Activated B cell treated with CpG ODN at 0.5 μM for 24 hours (primary cell): ENCODE measurements at regions of chr19 and their contacts with region 1.

Region 1: GRCh38 chr19:54168174-54168917 is 4.6 kb downstream of the TMC4 start:
- DNase-seq: peak; percentile 85
- ATAC-seq: peak; percentile 89
- H3K4me3 Mint-ChIP-seq: no peak overlapping the region
- H3K27ac Mint-ChIP-seq: no peak overlapping the region
- H3K4me1 Mint-ChIP-seq: peaks cover 24% of the 10 kb centered on the region
- H3K27me3 Mint-ChIP-seq: peaks cover 17% of the 10 kb centered on the region
- CTCF ChIP-seq: peak; percentile 71

Region 2: GRCh38 chr19:54077334-54077733 is 91.0 kb before region 1 on chr19:
- CTCF ChIA-PET with region 1: no interaction called
- POLR2A ChIA-PET with region 1: no interaction called
- intact Hi-C with region 1: no loop called
- DNase-seq: no peak
- ATAC-seq: no peak
- H3K4me3 Mint-ChIP-seq: no peak overlapping the region
- H3K27ac Mint-ChIP-seq: no peak overlapping the region
- H3K4me1 Mint-ChIP-seq: no peaks in the 10 kb centered on the region
- H3K27me3 Mint-ChIP-seq: no peaks in the 10 kb centered on the region
- CTCF ChIP-seq: no peak

Region 3: DNA sequence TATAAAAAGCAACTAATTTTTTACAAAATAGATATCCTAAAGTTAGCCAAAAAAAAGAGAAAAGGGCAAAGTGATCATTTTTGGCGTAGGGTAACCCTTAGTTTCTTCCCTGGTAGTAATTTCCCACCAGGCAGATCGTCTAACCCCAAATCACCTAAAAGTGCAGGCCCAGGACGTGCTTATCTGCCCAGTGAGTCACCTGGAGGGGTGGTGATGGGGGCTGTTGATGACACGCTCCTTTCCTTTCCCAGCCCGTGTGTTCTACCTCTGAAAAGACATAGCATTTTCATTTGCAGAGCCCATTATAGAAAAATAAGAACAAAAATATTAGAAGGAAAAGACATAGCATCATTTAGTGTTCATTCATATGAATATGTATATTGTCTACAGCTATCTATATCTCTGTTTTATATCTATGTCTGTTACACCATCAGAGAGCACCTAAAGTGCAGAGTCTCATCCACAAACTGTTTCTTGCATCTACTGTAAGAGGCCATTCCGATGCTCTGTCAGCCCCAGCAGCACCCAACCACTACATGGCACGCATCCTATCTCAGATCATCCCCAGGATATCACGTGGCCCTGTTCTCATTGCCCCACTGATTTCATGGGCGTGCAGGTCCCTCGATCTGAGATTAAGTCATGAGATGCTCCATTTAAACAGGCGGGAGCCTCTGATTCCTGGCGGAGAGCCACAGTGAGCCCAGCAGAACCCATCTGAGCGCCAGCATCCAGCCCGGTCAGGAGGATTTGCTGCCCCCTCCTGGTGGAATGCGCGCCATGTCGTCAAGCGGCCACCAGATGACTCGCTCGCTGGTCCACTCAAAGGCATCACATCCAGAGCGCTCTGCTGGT is 63.0 kb after region 1 on chr19:
- CTCF ChIA-PET with region 1: interaction called, 5 read pairs
- POLR2A ChIA-PET with region 1: no interaction called
- intact Hi-C with region 1: loop called (anchors 1 kb)
- DNase-seq: peak; percentile 73
- ATAC-seq: peak; percentile 96
- H3K4me3 Mint-ChIP-seq: no peak overlapping the region
- H3K27ac Mint-ChIP-seq: no peak overlapping the region
- H3K4me1 Mint-ChIP-seq: peaks cover 6% of the 10 kb centered on the region
- H3K27me3 Mint-ChIP-seq: peaks cover 44% of the 10 kb centered on the region
- CTCF ChIP-seq: no peak